ENCODE measurements at regions of chr19 and their contacts with region 1.

Region 1: DNA sequence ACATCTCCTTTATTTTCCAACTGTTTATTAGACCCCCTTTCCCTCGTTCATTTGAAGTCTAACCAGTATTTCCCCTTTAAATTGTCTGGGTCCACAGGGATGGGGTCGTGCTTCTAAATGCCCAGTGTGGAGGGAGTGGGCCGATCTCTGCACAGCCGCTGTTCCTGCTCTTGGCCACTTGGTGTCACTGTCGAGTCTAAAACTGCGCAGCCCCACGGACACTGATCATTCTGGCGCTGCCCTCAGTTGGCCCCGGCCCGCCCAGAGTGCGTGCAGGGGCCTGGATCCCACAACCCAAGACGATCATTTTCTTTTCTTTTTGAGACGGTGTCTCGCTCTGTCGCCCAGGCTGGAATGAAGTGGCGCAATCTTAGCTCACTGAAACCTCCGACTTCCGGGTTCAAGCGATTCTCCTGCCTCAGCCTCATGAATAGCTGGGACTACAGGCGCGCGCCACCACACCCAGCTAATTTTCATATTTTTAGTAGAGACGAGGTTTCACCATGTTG is 12.0 kb downstream of the WDR88 start:
- DNase-seq: peak; percentile 64
- H3K4me3 Mint-ChIP-seq: no peak overlapping the region
- H3K27ac Mint-ChIP-seq: no peak overlapping the region
- H3K4me1 Mint-ChIP-seq: peaks cover 6% of the 10 kb centered on the region
- H3K27me3 Mint-ChIP-seq: peaks cover 12% of the 10 kb centered on the region
- CTCF ChIP-seq: peak; percentile 91

Region 2: DNA sequence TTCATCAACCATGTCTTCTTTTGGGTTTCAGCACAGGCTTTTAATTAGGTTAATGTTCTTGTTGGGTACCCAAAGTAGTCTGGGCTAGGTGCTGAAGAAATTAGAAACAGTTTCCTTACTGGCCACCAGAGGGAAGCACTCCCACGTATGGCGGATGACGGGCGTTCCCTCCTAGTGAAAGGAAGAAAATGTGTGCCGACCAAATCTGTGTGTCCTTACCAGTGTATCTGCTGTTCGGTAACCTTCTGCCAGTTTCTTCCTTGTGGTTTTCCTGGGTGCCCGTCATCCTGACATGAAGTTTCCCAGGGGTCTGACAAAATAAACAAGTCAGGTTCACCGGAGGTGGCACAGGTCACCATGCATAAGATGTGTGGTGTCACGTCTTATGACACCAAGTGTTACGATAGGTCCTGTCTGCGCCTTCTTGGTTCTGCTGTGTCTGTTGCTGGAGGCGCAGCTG is 18.0 kb before region 1 on chr19:
- CTCF ChIA-PET with region 1: interaction called, 20 read pairs
- POLR2A ChIA-PET with region 1: no interaction called
- intact Hi-C with region 1: no loop called
- DNase-seq: peak; percentile 71
- H3K4me3 Mint-ChIP-seq: no peak overlapping the region
- H3K27ac Mint-ChIP-seq: no peak overlapping the region
- H3K4me1 Mint-ChIP-seq: no peaks in the 10 kb centered on the region
- H3K27me3 Mint-ChIP-seq: no peaks in the 10 kb centered on the region
- CTCF ChIP-seq: peak; percentile 72

Region 3: GRCh38 chr19:33156334-33156733 is 12.4 kb after region 1 on chr19:
- CTCF ChIA-PET with region 1: interaction called, 19 read pairs
- POLR2A ChIA-PET with region 1: interaction called, 3 read pairs
- intact Hi-C with region 1: no loop called
- DNase-seq: peak; percentile 80
- H3K4me3 Mint-ChIP-seq: no peak overlapping the region
- H3K27ac Mint-ChIP-seq: no peak overlapping the region
- H3K4me1 Mint-ChIP-seq: no peaks in the 10 kb centered on the region
- H3K27me3 Mint-ChIP-seq: no peaks in the 10 kb centered on the region
- CTCF ChIP-seq: no peak

Region 4: DNA sequence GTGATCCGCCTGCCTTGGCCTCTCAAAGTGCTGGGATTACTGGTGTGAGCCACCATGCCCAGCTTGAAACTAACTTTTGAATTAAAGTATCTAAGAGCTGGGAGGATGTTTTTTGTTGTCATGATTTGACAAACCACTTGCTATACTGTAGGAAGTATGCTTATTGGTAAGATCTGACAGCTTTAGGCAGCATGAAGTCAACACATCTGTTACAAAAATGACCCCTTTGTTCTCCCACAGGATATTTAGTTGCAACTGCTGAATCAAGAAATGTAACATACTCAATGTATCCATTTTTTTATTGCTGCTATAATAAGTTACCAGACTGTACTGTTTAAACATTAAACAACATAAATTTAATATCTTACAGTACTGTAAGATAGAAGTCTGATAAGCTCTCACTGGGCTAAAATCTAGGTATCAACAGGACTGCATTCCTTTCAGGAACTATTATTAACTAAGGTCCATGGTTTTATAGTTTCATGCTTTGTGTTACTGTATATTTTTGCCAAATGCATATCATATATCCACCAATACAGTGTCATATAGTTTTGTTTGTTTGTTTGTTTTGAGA is 27.4 kb after region 1 on chr19:
- CTCF ChIA-PET with region 1: interaction called, 14 read pairs
- POLR2A ChIA-PET with region 1: interaction called, 7 read pairs
- intact Hi-C with region 1: loop called (anchors 2 kb)
- DNase-seq: no peak
- H3K4me3 Mint-ChIP-seq: no peak overlapping the region
- H3K27ac Mint-ChIP-seq: no peak overlapping the region
- H3K4me1 Mint-ChIP-seq: peaks cover 9% of the 10 kb centered on the region
- H3K27me3 Mint-ChIP-seq: no peaks in the 10 kb centered on the region
- CTCF ChIP-seq: no peak

Region 5: DNA sequence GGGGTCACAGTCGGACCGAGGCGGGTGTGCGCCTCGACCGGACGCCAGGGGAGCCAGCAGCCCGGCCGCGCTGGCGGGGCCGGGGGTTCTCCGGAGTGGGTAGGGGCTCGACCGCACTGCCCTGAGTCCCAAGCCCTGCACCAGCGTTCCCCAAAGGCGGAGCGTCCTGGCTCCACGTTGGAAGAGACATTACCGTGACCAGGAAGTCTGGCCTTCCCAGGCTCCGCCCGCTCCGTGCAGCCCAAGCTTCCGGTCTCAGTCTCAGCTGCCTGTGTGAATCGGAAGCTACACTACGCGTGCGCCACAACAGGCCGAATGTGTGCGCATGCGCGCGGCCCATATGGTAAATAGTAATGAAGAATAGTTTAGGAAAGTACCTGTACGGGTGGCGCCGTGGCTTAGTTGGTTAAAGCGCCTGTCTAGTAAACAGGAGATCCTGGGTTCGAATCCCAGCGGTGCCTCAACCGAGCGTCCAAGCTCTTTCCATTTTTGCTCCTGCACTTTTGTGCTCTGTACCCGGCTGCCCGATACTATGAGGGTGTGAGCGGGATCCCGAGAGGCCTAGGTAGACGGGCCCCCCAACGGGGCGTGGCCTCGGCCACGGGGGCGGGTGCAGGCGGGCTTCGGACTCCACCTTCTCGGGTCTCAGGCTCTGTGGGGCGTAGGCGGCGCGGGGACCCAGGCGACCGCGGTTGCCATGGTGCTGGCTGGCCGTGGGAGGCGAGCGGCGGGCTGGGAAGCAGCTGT is 32.9 kb after region 1 on chr19:
- CTCF ChIA-PET with region 1: interaction called, 5 read pairs
- POLR2A ChIA-PET with region 1: interaction called, 7 read pairs
- intact Hi-C with region 1: loop called (anchors 2 kb)
- DNase-seq: peak; percentile 99
- H3K4me3 Mint-ChIP-seq: peak overlapping the region; percentile 93
- H3K27ac Mint-ChIP-seq: peak overlapping the region; percentile 66
- H3K4me1 Mint-ChIP-seq: peaks cover 9% of the 10 kb centered on the region
- H3K27me3 Mint-ChIP-seq: no peaks in the 10 kb centered on the region
- CTCF ChIP-seq: no peak

Region 6: GRCh38 chr19:33235269-33235995 is 91.5 kb after region 1 on chr19:
- CTCF ChIA-PET with region 1: interaction called, 5 read pairs
- POLR2A ChIA-PET with region 1: no interaction called
- intact Hi-C with region 1: loop called (anchors 5 kb)
- DNase-seq: peak; percentile 80
- H3K4me3 Mint-ChIP-seq: no peak overlapping the region
- H3K27ac Mint-ChIP-seq: no peak overlapping the region
- H3K4me1 Mint-ChIP-seq: no peaks in the 10 kb centered on the region
- H3K27me3 Mint-ChIP-seq: no peaks in the 10 kb centered on the region
- CTCF ChIP-seq: peak; percentile 86

Region 7: DNA sequence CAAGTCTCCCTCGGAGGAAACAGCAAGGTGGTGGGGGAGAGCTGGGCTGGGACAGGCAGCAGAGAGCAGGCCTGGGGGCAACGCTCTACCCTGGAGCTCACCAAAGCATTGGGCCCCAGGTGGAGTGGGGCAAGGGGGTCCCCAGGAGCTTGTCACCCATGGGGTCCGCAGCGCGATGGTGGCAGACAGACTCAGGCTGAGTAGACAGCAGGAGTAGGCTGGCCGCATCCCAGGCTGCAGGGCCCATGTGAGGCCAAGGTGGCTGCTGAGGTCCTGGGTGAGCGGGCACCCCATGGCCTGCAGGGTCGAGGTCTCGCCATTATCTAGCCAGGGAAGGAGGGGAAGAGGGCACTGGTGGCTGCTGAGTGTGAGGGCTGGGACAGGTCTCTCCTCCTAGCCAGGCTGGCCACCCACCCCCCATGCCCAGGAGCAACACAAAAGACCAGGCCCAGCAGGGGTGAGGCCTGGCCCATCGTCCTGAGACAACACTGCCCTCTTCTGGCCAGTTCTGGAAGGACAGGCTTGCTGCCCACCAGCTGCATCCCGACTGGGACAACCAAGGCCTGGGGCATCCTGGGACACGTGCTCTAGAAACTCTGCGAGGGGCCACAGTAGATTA is 262.7 kb after region 1 on chr19:
- CTCF ChIA-PET with region 1: interaction called, 9 read pairs
- POLR2A ChIA-PET with region 1: no interaction called
- intact Hi-C with region 1: loop called (anchors 1 kb)
- DNase-seq: peak; percentile 73
- H3K4me3 Mint-ChIP-seq: no peak overlapping the region
- H3K27ac Mint-ChIP-seq: no peak overlapping the region
- H3K4me1 Mint-ChIP-seq: no peaks in the 10 kb centered on the region
- H3K27me3 Mint-ChIP-seq: no peaks in the 10 kb centered on the region
- CTCF ChIP-seq: peak; percentile 95